Ovary (tissue), 10 donors: ENCODE measurements at regions of chr19 and their contacts with region 1.

Region 1: GRCh38 chr19:19138169-19138981 is at the start of gene TMEM161A:
- DNase-seq: peak; percentile 97 to 99 (median 98)
- H3K4me3 ChIP-seq: peak within 1 kb of the TSS; percentile 73
- H3K27ac ChIP-seq: peak within 1 kb of the TSS in 1 of 2 donors; percentile 34
- H3K4me1 ChIP-seq: peaks cover 10% of the 10 kb centered on the region
- H3K27me3 ChIP-seq: no peaks in the 10 kb centered on the region
- CTCF ChIP-seq: no peak
- EP300 ChIP-seq: no peak
- POLR2A ChIP-seq: peak; percentile 48
- total RNA-seq, gene TMEM161A: 15.9 to 33.9 (median 23.9) TPM

Region 2: GRCh38 chr19:19063183-19064097 is 74.9 kb before region 1 on chr19 and contains the start of gene SLC25A42:
- intact Hi-C with region 1: loop called in 3 of 4 experiments (anchors 5 to 10 kb)
- DNase-seq: peak; percentile 99 to 100 (median 100)
- H3K4me3 ChIP-seq: peak within 1 kb of the TSS; percentile 83
- H3K27ac ChIP-seq: peak within 1 kb of the TSS; percentile 33 to 72
- H3K4me1 ChIP-seq: peaks cover 3% of the 10 kb centered on the region
- H3K27me3 ChIP-seq: no peaks in the 10 kb centered on the region
- CTCF ChIP-seq: no peak
- EP300 ChIP-seq: no peak
- POLR2A ChIP-seq: no peak
- total RNA-seq, gene SLC25A42: 9.5 to 34.3 (median 23.2) TPM

Region 3: GRCh38 chr19:19238126-19238852 is 99.9 kb after region 1 on chr19:
- intact Hi-C with region 1: no loop called
- DNase-seq: no peak
- H3K4me3 ChIP-seq: no peak overlapping the region
- H3K27ac ChIP-seq: no peak overlapping the region
- H3K4me1 ChIP-seq: no peaks in the 10 kb centered on the region
- H3K27me3 ChIP-seq: no peaks in the 10 kb centered on the region
- CTCF ChIP-seq: no peak
- EP300 ChIP-seq: no peak
- POLR2A ChIP-seq: no peak